CD4-positive, alpha-beta memory T cell (primary cell): ENCODE measurements at regions of chr2 and their contacts with region 1.

Region 1: GRCh38 chr2:20097879-20098714 is 46.7 kb upstream of the LAPTM4A start:
- DNase-seq: peak; percentile 65 to 72 (median 70)
- H3K4me3 ChIP-seq: no peak overlapping the region
- H3K4me3 Mint-ChIP-seq: no peak overlapping the region
- H3K27ac ChIP-seq: no peak overlapping the region
- H3K27ac Mint-ChIP-seq: peak overlapping the region in 1 of 7 donors; percentile 28
- H3K4me1 ChIP-seq: no peaks in the 10 kb centered on the region
- H3K4me1 Mint-ChIP-seq: peaks cover 0 to 4% (median 0%) of the 10 kb centered on the region in 4 donors
- H3K27me3 ChIP-seq: no peaks in the 10 kb centered on the region
- H3K27me3 Mint-ChIP-seq: peaks cover 10 to 14% of the 10 kb centered on the region in 2 donors

Region 2: DNA sequence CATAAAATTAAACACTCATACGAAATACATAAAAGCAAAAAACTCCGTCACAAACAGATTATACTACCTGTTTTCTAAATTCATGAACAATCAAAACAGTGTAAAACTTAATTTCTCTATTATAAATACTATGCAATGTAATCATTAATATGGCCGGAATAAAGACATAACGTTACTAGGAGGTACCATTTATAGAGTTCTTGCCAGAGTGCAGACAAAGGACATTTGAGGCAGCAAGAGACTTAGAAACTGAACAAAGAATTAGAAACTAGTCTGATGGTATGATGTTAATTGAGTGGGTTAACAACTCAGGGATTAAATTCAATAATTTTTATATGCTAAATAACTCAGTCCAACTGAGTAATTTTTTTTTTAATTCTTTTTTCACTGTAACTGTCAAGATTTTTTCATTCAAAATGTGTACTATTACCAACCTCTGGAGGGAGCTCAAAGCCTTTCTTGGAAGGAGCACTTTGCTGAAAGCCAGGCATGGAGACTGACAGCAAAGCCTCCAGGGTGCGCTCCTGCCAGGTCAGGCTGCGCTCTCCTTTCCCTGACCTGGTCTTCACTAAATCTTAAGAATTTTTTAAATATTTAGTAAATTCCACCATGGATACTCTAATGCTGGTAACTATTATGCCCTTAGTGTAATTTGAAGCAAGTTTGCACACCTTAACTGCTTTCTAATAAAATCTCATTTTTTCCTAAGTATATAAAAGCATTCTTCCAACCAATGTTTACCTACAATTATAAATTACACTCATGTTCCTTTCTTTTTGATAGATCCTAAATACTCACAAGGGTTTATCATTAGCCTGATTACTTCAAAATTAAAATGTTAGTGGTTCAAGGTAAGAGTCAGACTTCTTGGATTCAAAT is 142.3 kb before region 1 on chr2:
- CTCF ChIA-PET with region 1: interaction called, 6 read pairs
- POLR2A ChIA-PET with region 1: no interaction called
- intact Hi-C with region 1: loop called (anchors 1 kb)
- DNase-seq: peak; percentile 41 to 60 (median 48)
- H3K4me3 ChIP-seq: no peak overlapping the region
- H3K4me3 Mint-ChIP-seq: no peak overlapping the region
- H3K27ac ChIP-seq: no peak overlapping the region
- H3K27ac Mint-ChIP-seq: no peak overlapping the region
- H3K4me1 ChIP-seq: no peaks in the 10 kb centered on the region
- H3K4me1 Mint-ChIP-seq: no peaks in the 10 kb centered on the region
- H3K27me3 ChIP-seq: no peaks in the 10 kb centered on the region
- H3K27me3 Mint-ChIP-seq: no peaks in the 10 kb centered on the region